Transverse colon (tissue), 4 donors: ENCODE measurements at regions of chr15 and their contacts with region 1.

Region 1: DNA sequence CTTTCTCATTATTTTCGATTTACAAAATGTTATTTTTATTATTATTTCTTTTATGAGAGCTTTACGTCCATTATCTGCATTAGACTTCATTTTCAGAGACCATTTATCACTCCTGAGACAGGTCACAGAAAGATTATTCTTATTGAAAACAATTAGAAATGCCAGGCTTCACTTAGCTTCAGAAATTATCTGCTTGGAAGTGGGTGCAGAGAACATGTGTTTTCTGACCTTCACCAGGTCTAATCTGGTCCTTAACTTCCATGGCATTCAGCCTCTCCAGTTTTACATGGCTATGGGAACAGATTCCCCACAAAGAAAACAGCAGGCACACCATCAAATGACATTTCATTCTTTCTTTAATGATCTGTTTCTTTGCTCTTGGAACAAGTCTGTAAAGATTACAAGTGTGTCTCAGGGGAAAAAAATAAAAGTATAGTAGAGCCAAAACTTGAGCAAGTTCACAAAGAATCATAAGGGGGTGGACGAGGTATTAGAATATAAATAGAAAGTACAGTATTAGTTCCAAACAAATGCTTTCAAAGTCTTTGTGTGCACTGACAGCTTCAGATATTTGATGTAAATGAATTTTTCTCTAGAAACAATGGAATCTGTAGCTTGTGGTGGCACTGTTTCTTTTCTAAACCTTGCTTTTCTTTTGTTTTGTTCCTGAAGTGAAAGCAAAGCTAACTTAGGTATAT is 294.2 kb upstream of the MEIS2 start:
- DNase-seq: no peak
- H3K4me3 ChIP-seq: no peak overlapping the region
- H3K27ac ChIP-seq: no peak overlapping the region
- H3K4me1 ChIP-seq: no peaks in the 10 kb centered on the region
- H3K27me3 ChIP-seq: no peaks in the 10 kb centered on the region
- CTCF ChIP-seq: no peak
- EP300 ChIP-seq: no peak
- POLR2A ChIP-seq: no peak

Region 2: DNA sequence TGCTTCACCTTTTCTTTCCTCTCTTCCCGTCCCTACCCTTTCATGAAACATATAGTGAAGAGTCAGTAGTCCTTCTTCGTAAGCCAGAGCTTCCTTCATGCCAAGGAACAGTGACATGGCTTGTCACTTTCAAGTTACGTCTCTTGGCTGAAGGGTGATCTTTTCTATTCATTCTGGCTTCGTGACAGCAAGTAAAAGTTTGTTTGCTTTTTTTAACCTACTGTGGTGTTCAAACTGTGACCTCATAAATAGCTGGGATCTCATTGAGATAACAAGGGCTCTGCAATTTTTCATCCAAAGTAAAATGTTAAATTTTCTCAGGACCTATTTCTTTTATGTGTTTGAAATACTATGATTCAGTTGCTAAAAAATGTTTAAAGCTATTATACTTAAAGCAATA is 804.6 kb before region 1 on chr15:
- in situ Hi-C with region 1: no loop called
- intact Hi-C with region 1: loop called (anchors 5 kb)
- DNase-seq: no peak
- H3K4me3 ChIP-seq: no peak overlapping the region
- H3K27ac ChIP-seq: no peak overlapping the region
- H3K4me1 ChIP-seq: peaks cover 0 to 4% (median 0%) of the 10 kb centered on the region in 4 donors
- H3K27me3 ChIP-seq: no peaks in the 10 kb centered on the region
- CTCF ChIP-seq: no peak
- EP300 ChIP-seq: no peak
- POLR2A ChIP-seq: no peak

Region 3: DNA sequence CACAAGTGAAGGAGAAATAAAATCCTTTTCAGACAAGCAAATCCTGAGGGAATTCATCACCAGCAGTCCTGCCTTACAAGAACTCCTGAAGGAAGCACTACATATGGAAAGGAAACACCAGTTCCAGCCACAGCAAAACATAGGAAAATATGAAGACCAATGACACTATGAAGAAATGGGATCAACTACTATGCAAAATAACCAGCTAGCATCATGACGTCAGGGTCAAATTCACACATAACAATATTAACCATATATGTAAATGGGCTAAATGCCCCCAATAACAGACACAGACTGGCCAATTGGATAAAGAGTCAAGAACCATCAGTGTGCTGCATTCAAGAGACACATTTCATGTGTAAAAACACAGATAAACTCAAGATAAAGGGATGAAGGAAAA is 109.0 kb after region 1 on chr15:
- in situ Hi-C with region 1: no loop called
- intact Hi-C with region 1: no loop called
- DNase-seq: no peak
- H3K4me3 ChIP-seq: no peak overlapping the region
- H3K27ac ChIP-seq: no peak overlapping the region
- H3K4me1 ChIP-seq: no peaks in the 10 kb centered on the region
- H3K27me3 ChIP-seq: no peaks in the 10 kb centered on the region
- CTCF ChIP-seq: no peak
- EP300 ChIP-seq: no peak
- POLR2A ChIP-seq: no peak